GM10248 (cell line): ENCODE measurements at regions of chr10 and their contacts with region 1.

Region 1: GRCh38 chr10:43594944-43595589 is 11.2 kb upstream of the ZNF485 start:
- DNase-seq: peak; percentile 67
- CTCF ChIP-seq: no peak

Region 2: GRCh38 chr10:43606322-43607198 is 11.5 kb after region 1 on chr10 and contains the start of gene ZNF485:
- CTCF ChIA-PET with region 1: interaction called, 10 read pairs
- POLR2A ChIA-PET with region 1: no interaction called
- DNase-seq: peak; percentile 85
- CTCF ChIP-seq: no peak

Region 3: GRCh38 chr10:43623351-43623750 is 28.3 kb after region 1 on chr10:
- CTCF ChIA-PET with region 1: no interaction called
- POLR2A ChIA-PET with region 1: no interaction called
- DNase-seq: no peak
- CTCF ChIP-seq: no peak

Region 4: GRCh38 chr10:43998021-43998809 is 403.1 kb after region 1 on chr10:
- CTCF ChIA-PET with region 1: no interaction called
- POLR2A ChIA-PET with region 1: no interaction called
- DNase-seq: no peak
- CTCF ChIP-seq: no peak